ENCODE measurements at regions of chr3 and their contacts with region 1.

Region 1: DNA sequence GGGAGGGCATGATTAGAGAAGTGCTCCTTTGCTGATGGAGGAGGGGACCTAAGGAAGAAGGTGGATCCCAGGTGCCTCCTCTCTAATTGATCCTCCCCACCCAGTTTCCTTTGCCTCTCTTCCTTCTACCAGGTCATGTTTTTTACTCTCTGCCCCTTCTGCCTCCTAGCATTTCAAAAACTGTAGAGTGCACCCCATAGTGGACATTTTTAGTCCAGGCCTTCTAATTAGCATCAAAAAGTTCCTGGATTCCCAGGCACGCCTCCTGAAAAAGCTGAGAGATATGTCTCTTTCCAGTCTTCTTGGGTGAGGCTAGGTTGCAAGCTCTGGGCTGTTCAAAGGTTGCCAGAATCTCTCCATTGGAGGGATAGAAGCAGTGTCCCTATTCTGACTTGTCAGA is 18.7 kb upstream of the ITGB5 start:
- DNase-seq: no peak
- H3K4me3 ChIP-seq: no peak overlapping the region
- H3K4me3 Mint-ChIP-seq: no peak overlapping the region
- H3K27ac Mint-ChIP-seq: no peak overlapping the region
- H3K4me1 ChIP-seq: no peaks in the 10 kb centered on the region; the same call in 1 of the 2 replicates
- H3K4me1 Mint-ChIP-seq: no peaks in the 10 kb centered on the region
- H3K27me3 ChIP-seq: no peaks in the 10 kb centered on the region
- H3K27me3 Mint-ChIP-seq: no peaks in the 10 kb centered on the region
- CTCF ChIP-seq: peak in 1 of 2 experiments; percentile 25

Region 2: GRCh38 chr3:124786441-124787241 is 119.2 kb before region 1 on chr3:
- CTCF ChIA-PET with region 1: interaction called, 48 read pairs
- POLR2A ChIA-PET with region 1: no interaction called
- intact Hi-C with region 1: loop called (anchors 1 kb)
- DNase-seq: no peak
- H3K4me3 ChIP-seq: no peak overlapping the region
- H3K4me3 Mint-ChIP-seq: no peak overlapping the region
- H3K27ac Mint-ChIP-seq: peak overlapping the region; percentile 53
- H3K4me1 ChIP-seq: peaks cover 9% of the 10 kb centered on the region; the same call in 1 of the 2 replicates
- H3K4me1 Mint-ChIP-seq: peaks cover 6% of the 10 kb centered on the region
- H3K27me3 ChIP-seq: no peaks in the 10 kb centered on the region
- H3K27me3 Mint-ChIP-seq: no peaks in the 10 kb centered on the region
- CTCF ChIP-seq: peak; percentile 24 to 25

Region 3: GRCh38 chr3:124867511-124867910 is 38.3 kb before region 1 on chr3:
- CTCF ChIA-PET with region 1: no interaction called
- POLR2A ChIA-PET with region 1: no interaction called
- intact Hi-C with region 1: no loop called
- DNase-seq: no peak
- H3K4me3 ChIP-seq: no peak overlapping the region
- H3K4me3 Mint-ChIP-seq: no peak overlapping the region
- H3K27ac Mint-ChIP-seq: peak overlapping the region; percentile 48
- H3K4me1 ChIP-seq: no peaks in the 10 kb centered on the region
- H3K4me1 Mint-ChIP-seq: no peaks in the 10 kb centered on the region
- H3K27me3 ChIP-seq: no peaks in the 10 kb centered on the region
- H3K27me3 Mint-ChIP-seq: no peaks in the 10 kb centered on the region
- CTCF ChIP-seq: no peak

Region 4: GRCh38 chr3:124887177-124887931 is 18.5 kb before region 1 on chr3 and contains the start of gene ITGB5:
- CTCF ChIA-PET with region 1: interaction called, 5 read pairs
- POLR2A ChIA-PET with region 1: no interaction called
- intact Hi-C with region 1: loop called (anchors 2 kb)
- DNase-seq: peak; percentile 88 to 90
- H3K4me3 ChIP-seq: peak within 1 kb of the TSS; percentile 69
- H3K4me3 Mint-ChIP-seq: peak within 1 kb of the TSS; percentile 94
- H3K27ac Mint-ChIP-seq: peak within 1 kb of the TSS; percentile 88
- H3K4me1 ChIP-seq: peaks cover 29% of the 10 kb centered on the region
- H3K4me1 Mint-ChIP-seq: peaks cover 17% of the 10 kb centered on the region
- H3K27me3 ChIP-seq: no peaks in the 10 kb centered on the region
- H3K27me3 Mint-ChIP-seq: no peaks in the 10 kb centered on the region
- CTCF ChIP-seq: no peak
- total RNA-seq, gene ITGB5: 123 and 132 TPM in 2 replicates

Region 5: GRCh38 chr3:125055913-125056745 is 150.3 kb after region 1 on chr3 and contains the start of gene HEG1:
- CTCF ChIA-PET with region 1: no interaction called
- POLR2A ChIA-PET with region 1: no interaction called
- intact Hi-C with region 1: no loop called
- DNase-seq: peak; percentile 85 to 90
- H3K4me3 ChIP-seq: peak within 1 kb of the TSS; percentile 64
- H3K4me3 Mint-ChIP-seq: peak within 1 kb of the TSS; percentile 84
- H3K27ac Mint-ChIP-seq: peak within 1 kb of the TSS; percentile 33
- H3K4me1 ChIP-seq: peaks cover 64% of the 10 kb centered on the region
- H3K4me1 Mint-ChIP-seq: peaks cover 49% of the 10 kb centered on the region
- H3K27me3 ChIP-seq: no peaks in the 10 kb centered on the region
- H3K27me3 Mint-ChIP-seq: no peaks in the 10 kb centered on the region
- CTCF ChIP-seq: no peak
- total RNA-seq, gene HEG1: 51.8 and 69.8 TPM in 2 replicates